Ovary (tissue), 10 donors: ENCODE measurements at regions of chr11 and their contacts with region 1.

Region 1: GRCh38 chr11:28303477-28304191 is 195.4 kb downstream of the METTL15 start:
- DNase-seq: no peak
- H3K4me3 ChIP-seq: no peak overlapping the region
- H3K27ac ChIP-seq: no peak overlapping the region
- H3K4me1 ChIP-seq: no peaks in the 10 kb centered on the region
- H3K27me3 ChIP-seq: no peaks in the 10 kb centered on the region
- CTCF ChIP-seq: no peak
- EP300 ChIP-seq: no peak
- POLR2A ChIP-seq: no peak

Region 2: DNA sequence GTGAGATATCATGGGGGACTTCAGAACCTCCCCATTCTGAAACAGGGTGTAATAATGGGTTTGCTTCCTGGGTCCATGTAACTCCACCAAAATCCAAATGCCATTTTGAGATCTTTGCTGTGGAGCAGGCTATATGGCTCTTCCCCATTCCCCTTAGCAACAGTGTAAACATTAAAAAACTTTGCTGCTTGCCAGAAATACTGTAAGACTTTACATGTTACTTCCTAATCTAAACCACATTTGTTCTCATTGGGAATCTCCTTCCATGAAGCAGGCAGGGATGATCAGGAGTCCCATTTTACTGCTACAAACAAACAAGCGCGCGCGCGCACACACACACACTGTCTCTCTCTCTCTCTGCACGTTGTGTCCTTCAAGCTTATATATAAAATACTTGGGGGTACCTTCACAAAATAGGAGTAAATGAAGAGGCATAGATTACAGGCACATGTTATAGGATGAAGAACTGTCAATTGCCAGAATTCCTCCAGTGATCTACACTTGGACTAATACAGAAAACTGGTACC is 1885.2 kb before region 1 on chr11:
- intact Hi-C with region 1: no loop called
- DNase-seq: no peak
- H3K4me3 ChIP-seq: no peak overlapping the region
- H3K27ac ChIP-seq: no peak overlapping the region
- H3K4me1 ChIP-seq: no peaks in the 10 kb centered on the region
- H3K27me3 ChIP-seq: no peaks in the 10 kb centered on the region
- CTCF ChIP-seq: no peak
- EP300 ChIP-seq: no peak
- POLR2A ChIP-seq: no peak

Region 3: GRCh38 chr11:28338371-28338770 is 34.7 kb after region 1 on chr11:
- intact Hi-C with region 1: loop called in 1 of 4 experiments (anchors 2 kb)
- DNase-seq: no peak
- H3K4me3 ChIP-seq: no peak overlapping the region
- H3K27ac ChIP-seq: no peak overlapping the region
- H3K4me1 ChIP-seq: no peaks in the 10 kb centered on the region
- H3K27me3 ChIP-seq: no peaks in the 10 kb centered on the region
- CTCF ChIP-seq: no peak
- EP300 ChIP-seq: no peak
- POLR2A ChIP-seq: no peak

Region 4: DNA sequence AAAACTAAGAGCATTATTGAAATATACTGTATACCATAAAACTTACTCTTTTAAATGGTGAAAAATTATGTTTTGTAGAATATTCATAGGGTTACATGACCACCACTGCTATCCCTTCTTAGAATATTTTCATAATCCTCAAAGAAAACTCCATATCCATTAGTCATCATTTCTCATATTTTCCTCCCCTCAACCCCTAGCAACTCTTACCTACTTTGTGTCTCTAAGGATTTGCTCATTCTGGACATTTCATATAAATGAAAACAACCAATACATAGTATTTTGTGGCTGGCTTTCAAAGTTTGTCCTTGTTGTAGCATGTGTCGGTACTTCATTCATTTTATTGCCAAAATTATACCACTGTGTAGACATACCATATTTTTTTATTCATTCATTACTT is 849.4 kb after region 1 on chr11:
- intact Hi-C with region 1: no loop called
- DNase-seq: no peak
- H3K4me3 ChIP-seq: no peak overlapping the region
- H3K27ac ChIP-seq: no peak overlapping the region
- H3K4me1 ChIP-seq: no peaks in the 10 kb centered on the region
- H3K27me3 ChIP-seq: no peaks in the 10 kb centered on the region
- CTCF ChIP-seq: no peak
- EP300 ChIP-seq: no peak
- POLR2A ChIP-seq: no peak